ENCODE measurements at regions of chr12 and their contacts with region 1.

Region 1: DNA sequence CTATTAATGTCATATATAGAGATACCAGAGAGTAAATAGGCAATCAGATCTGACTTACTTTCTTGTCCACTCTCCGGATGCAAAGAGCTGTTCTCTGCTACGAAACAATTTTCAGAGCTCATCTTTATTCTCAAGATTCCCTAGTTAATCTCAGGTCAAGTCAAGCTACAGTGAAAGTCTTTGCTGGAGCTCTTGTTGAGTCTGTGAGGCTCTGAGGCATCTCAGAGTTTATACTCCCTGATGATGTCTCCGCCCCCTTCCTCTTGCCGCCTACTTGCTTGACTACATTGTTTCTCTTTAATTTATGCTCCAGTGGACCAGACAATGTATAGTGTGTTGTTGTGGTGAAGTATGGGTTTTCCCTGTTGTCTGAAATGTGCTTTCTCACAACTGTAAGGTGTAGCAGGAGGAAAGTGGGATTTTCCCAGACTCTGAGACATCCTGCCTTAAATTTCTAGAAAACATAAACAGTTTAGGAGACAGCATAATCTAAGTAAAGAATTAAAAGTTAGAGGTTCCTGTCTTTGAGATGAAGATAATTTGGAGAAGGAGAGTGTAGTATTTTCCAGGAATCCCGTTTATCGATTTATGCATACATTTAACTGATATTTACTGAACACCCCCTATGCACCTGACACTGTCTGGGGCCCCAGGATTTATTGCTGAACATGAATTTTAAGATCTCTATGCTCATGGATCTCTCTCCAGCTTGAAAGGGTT is at the start of gene CD69:
- DNase-seq: no peak
- H3K4me3 ChIP-seq: no peak within 1 kb of the TSS
- H3K27ac ChIP-seq: no peak within 1 kb of the TSS
- H3K4me1 ChIP-seq: no peaks in the 10 kb centered on the region
- H3K27me3 ChIP-seq: peaks cover 9% of the 10 kb centered on the region; the same call in 1 of the 2 replicates
- CTCF ChIP-seq: no peak
- EP300 ChIP-seq: no peak
- RAD21 ChIP-seq: no peak
- polyA plus RNA-seq, gene CD69: not detected in 2 replicates

Region 2: GRCh38 chr12:9741726-9742125 is 19.1 kb before region 1 on chr12:
- CTCF ChIA-PET with region 1: interaction called, 11 read pairs
- POLR2A ChIA-PET with region 1: no interaction called
- DNase-seq: no peak
- H3K4me3 ChIP-seq: no peak overlapping the region
- H3K27ac ChIP-seq: no peak overlapping the region
- H3K4me1 ChIP-seq: no peaks in the 10 kb centered on the region
- H3K27me3 ChIP-seq: peaks cover 49% of the 10 kb centered on the region; the same call in 1 of the 2 replicates
- CTCF ChIP-seq: no peak
- EP300 ChIP-seq: no peak
- RAD21 ChIP-seq: no peak

Region 3: DNA sequence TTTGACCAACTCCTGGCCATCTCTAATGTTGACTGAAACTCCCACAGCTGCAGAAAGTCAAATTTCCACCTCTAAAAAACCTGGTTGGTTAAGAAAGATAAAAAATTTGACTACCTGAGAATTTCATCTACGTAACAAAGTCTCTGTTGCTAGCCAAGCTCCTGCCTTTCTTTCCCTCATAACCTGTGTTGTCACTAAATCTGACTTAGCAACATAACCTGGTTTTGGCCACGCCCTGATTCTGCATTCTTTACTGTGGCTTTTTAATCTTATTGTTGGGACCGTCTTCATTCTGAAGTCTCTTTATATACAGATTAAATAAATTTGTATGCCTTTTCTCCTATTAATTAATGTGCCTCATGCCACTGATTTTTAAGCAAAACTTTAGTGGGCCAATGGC is 15.9 kb after region 1 on chr12:
- CTCF ChIA-PET with region 1: no interaction called
- POLR2A ChIA-PET with region 1: no interaction called
- DNase-seq: no peak
- H3K4me3 ChIP-seq: no peak overlapping the region
- H3K27ac ChIP-seq: no peak overlapping the region
- H3K4me1 ChIP-seq: no peaks in the 10 kb centered on the region
- H3K27me3 ChIP-seq: no peaks in the 10 kb centered on the region; the same call in 1 of the 2 replicates
- CTCF ChIP-seq: no peak
- EP300 ChIP-seq: no peak
- RAD21 ChIP-seq: no peak

Measured in SK-N-SH (cell line).